ENCODE measurements at regions of chr17 and their contacts with region 1.

Region 1: DNA sequence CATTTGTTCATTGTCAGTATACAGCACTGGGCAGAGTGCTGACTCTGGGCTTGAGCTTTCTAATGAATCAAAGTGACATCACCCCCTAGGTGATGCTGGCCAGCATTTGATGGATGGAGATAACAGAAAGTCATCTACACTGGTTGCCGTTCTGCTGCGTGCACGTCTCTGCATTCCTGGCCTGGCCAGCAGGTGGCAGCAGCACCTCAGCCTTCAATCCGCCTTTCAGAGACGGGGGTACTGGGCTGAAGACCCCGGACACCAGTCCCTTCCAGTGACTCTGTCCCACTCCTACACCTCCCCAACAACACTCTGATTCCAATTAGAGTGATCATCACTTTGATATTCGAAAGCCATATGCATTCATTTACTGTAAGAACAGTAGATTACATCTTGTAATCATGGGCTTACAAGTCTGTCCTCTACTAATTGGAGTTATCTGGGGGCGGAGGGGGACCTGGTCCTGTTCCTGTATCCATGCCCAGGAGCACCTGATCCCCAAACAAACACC is 6.0 kb downstream of the CPSF4L start:
- DNase-seq: no peak
- H3K4me3 ChIP-seq: no peak overlapping the region
- CTCF ChIP-seq: peak; percentile 93

Region 2: GRCh38 chr17:72725433-72726068 is 530.2 kb before region 1 on chr17:
- CTCF ChIA-PET with region 1: interaction called, 199 read pairs
- POLR2A ChIA-PET with region 1: no interaction called
- DNase-seq: no peak
- H3K4me3 ChIP-seq: no peak overlapping the region
- CTCF ChIP-seq: peak; percentile 90

Region 3: GRCh38 chr17:73030501-73030921 is 225.2 kb before region 1 on chr17:
- CTCF ChIA-PET with region 1: no interaction called
- POLR2A ChIA-PET with region 1: no interaction called
- DNase-seq: no peak
- H3K4me3 ChIP-seq: no peak overlapping the region
- CTCF ChIP-seq: no peak

Region 4: DNA sequence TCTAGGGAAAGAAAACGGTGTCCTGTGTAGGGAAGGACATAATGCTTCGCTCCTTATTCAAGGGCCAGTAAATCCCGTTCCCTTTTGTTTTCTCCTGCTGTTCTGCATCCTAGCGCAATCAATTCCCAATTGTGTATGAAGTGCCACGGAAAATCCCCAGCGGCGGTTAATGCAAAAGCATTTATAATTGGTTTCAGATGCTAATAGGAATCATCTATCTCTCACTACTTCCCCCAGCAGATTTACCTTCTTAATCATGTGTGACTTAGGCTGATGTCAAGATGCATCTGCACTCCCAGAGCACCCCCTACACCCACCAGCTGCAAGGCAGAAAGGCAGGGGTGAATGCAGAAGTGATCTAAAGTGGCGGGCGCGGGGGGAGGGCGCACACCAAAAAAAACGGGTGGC is 123.6 kb before region 1 on chr17:
- CTCF ChIA-PET with region 1: no interaction called
- POLR2A ChIA-PET with region 1: no interaction called
- DNase-seq: no peak
- H3K4me3 ChIP-seq: no peak overlapping the region
- CTCF ChIP-seq: no peak

Region 5: GRCh38 chr17:73281928-73282327 is 26.2 kb after region 1 on chr17:
- CTCF ChIA-PET with region 1: interaction called, 20 read pairs
- POLR2A ChIA-PET with region 1: no interaction called
- DNase-seq: no peak
- H3K4me3 ChIP-seq: no peak overlapping the region
- CTCF ChIP-seq: no peak

Region 6: DNA sequence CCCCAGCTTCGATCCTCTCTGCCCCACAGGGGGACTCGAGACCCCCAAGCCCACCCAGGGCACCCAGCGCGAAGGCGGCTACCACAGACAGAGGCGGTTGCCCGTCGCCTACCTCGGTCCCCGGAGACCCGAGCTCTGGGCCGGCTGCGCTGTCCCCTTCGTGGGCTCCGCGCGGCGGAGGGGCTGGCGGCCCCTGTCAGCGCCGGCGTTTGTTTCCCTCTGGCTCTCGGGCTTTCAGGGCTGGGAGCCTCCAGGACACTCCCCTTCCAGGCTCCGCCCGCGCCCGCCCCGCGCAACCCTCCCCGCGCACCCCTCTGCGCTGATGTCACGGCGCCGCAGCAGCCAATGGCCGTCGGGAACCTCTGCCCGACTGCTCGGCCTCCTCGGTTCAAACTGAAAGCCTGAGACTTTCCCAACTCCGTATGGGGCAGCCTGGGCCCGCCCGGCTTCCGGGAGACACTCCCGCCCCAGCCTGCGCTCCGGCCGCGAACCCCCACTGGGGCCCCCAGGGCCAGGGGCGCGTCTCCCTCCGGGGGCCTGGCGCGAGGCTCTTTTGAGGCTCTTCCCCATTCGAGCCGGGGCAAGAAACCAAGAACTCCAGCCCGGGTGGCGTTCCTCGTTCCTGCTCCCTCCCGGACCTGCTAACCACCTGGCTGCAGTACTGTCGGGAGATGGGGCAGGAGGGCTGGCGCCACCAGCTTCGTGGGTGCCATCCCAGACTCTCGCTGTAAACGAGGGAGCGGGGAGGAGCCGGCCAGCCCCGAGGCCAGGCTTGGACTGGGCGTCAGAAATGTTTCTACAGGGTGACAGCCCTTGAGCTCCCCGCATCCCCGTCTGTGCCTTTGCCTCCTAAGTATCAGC is 56.3 kb after region 1 on chr17 and contains the start of gene CDC42EP4:
- CTCF ChIA-PET with region 1: interaction called, 17 read pairs
- POLR2A ChIA-PET with region 1: no interaction called
- DNase-seq: no peak
- H3K4me3 ChIP-seq: peak within 1 kb of the TSS; percentile 96
- CTCF ChIP-seq: no peak

Region 7: DNA sequence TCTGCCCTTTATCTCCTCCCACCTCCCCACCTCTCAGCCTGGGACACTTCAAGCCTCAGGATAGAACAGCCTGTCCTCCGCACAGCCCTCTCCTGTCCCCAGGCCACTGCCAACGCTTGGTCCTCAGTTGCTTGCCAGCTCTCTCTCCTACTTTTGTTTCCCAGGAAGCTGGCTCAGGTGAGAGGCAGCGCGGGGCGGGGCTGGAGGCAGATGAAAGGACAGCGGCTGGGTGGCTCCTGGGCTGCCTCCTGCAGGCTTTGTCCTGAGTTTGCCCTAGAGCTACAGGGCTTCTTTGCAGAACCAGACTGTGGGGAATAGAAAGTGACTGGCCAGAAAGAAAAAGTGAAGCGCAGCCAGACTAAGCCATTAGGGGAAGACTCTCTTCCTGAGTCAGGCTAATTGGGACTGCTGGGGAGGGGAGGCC is 104.3 kb after region 1 on chr17:
- CTCF ChIA-PET with region 1: interaction called, 848 read pairs
- POLR2A ChIA-PET with region 1: no interaction called
- DNase-seq: no peak
- H3K4me3 ChIP-seq: no peak overlapping the region
- CTCF ChIP-seq: no peak

Region 8: DNA sequence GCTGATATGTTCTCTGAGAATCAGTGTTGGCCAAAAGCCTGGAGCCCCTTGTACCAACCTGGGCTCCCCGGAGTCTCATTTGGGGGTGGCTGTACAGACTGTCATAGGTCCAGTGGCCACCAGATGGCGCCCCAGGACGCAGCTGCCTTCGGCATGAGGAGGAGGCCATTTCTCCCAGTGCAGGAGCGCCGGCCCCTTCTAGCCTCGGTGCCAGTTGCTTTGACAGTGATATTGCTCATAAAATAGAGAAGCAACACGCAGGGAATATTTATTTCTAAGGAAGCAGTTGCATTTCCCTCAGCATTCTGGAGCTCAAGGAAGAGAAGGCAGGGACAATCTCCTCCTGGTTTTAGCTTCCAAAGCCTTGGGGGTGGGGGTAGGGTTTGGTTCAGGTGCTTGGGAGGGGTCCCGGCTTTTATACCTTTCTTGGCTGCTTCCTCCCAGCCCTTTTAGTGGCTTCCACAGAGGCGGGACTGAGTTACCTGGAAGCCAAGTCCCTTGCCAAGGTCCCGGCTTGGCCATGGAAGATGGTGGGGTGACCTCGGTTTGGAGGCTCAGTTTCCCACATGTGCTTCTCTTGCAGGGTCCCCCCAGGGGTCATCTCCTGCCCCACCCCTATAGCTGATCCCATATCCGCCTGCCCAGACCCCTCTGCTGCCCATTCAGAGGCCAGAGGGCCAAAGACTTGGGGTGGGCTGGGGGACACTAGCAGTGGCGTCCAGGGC is 173.9 kb after region 1 on chr17:
- CTCF ChIA-PET with region 1: interaction called, 20 read pairs
- POLR2A ChIA-PET with region 1: no interaction called
- DNase-seq: no peak
- H3K4me3 ChIP-seq: no peak overlapping the region
- CTCF ChIP-seq: peak; percentile 98